PC-9 (cell line): ENCODE measurements at regions of chr4 and their contacts with region 1.

Region 1: GRCh38 chr4:183840311-183840710 is 64.8 kb upstream of the STOX2 start:
- DNase-seq: peak; percentile 46 to 66
- H3K4me3 ChIP-seq: no peak overlapping the region
- H3K27ac ChIP-seq: no peak overlapping the region
- H3K4me1 ChIP-seq: no peaks in the 10 kb centered on the region
- H3K27me3 ChIP-seq: no peaks in the 10 kb centered on the region
- CTCF ChIP-seq: peak; percentile 83

Region 2: GRCh38 chr4:183738081-183738673 is 102.1 kb before region 1 on chr4:
- CTCF ChIA-PET with region 1: no interaction called
- POLR2A ChIA-PET with region 1: no interaction called
- intact Hi-C with region 1: loop called (anchors 5 kb)
- DNase-seq: peak; percentile 51 to 94
- H3K4me3 ChIP-seq: no peak overlapping the region
- H3K27ac ChIP-seq: peak overlapping the region; percentile 37
- H3K4me1 ChIP-seq: peaks cover 12% of the 10 kb centered on the region
- H3K27me3 ChIP-seq: no peaks in the 10 kb centered on the region
- CTCF ChIP-seq: no peak

Region 3: DNA sequence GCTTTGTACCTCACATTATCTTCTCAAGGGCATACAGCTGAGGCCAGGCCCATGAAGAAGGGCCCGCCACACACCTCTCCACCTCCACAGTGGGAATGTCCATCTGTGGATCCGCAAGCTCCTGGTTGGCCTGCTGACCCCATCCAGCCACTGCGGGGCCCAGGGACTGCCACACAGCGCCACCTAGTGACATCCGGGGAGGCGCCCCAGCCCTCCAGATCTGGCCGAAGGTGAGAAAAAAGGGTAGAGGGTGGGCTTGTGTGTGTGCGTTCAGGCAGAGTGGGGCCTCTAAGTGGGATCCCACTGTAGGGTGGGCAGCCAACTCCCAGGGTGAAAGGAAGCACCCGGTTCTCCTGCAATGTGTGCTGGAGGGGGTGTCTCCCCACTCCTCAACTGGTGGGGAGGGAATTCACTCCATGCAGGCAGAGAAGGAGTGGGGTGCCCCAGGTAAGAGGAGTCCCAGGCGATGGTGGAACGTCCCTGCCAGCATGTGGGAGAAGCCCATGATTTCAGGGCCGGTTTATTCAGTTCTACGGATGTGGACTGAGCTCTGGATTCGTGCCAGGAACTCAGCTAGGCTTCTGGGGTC is 260.1 kb after region 1 on chr4:
- CTCF ChIA-PET with region 1: no interaction called
- POLR2A ChIA-PET with region 1: no interaction called
- intact Hi-C with region 1: loop called (anchors 1 kb)
- DNase-seq: peak in 1 of 2 experiments; percentile 68
- H3K4me3 ChIP-seq: no peak overlapping the region
- H3K27ac ChIP-seq: no peak overlapping the region
- H3K4me1 ChIP-seq: no peaks in the 10 kb centered on the region
- H3K27me3 ChIP-seq: no peaks in the 10 kb centered on the region; the same call in 1 of the 2 replicates
- CTCF ChIP-seq: peak; percentile 83

Region 4: DNA sequence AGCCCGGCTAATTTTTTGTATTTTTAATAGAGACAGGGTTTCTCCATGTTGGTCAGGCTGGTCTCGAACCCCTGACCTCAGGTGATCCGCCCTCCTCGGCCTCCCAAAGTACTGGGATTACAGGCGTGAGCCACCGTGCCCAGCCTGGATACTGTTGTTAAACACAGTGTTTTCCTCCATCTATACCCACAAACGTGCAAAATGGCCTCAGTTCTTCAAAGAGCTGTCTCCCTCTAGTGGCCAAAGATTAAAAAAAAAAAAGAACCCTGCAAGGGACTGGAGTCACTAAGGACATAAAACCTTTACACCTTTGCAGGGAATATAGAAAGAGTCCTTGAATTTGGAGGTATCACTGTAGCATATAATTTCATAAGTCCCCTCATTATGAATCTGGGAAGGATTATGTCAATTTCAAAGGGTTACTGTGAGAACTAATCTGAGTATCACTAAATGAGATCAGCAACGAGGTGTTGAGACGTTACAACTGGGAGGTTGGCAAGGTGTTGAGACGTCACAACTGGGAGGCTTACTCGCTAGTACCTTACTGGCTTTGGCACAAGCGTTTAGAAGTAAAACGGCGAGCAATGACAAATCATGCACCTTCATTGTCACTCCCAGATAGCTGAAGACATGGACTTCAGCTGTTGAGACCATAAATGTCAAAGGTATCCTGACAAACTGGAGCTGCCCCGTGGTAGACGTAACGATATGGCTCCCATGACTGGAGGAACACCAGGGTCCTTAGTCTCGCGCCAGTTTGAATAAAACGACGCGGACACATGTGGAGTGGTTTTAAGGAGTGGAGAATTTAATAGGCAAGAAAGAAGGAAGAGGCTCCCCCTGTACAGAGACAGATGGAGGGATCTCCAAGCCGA is 410.7 kb after region 1 on chr4:
- CTCF ChIA-PET with region 1: no interaction called
- POLR2A ChIA-PET with region 1: no interaction called
- intact Hi-C with region 1: loop called (anchors 1 kb)
- DNase-seq: peak in 1 of 2 experiments; percentile 40
- H3K4me3 ChIP-seq: no peak overlapping the region
- H3K27ac ChIP-seq: no peak overlapping the region
- H3K4me1 ChIP-seq: no peaks in the 10 kb centered on the region
- H3K27me3 ChIP-seq: no peaks in the 10 kb centered on the region
- CTCF ChIP-seq: peak; percentile 72